ENCODE measurements at regions of chr14 and their contacts with region 1.

Region 1: GRCh38 chr14:73458151-73458976 is at the start of gene NUMB:
- DNase-seq: peak; percentile 99
- ATAC-seq: peak; percentile 97
- H3K4me3 ChIP-seq: peak within 1 kb of the TSS; percentile 61 to 81
- H3K27ac ChIP-seq: peak within 1 kb of the TSS; percentile 91
- H3K4me1 ChIP-seq: peaks cover 8% of the 10 kb centered on the region
- H3K27me3 ChIP-seq: no peaks in the 10 kb centered on the region
- CTCF ChIP-seq: no peak
- total RNA-seq, gene NUMB: 51.5 TPM

Region 2: DNA sequence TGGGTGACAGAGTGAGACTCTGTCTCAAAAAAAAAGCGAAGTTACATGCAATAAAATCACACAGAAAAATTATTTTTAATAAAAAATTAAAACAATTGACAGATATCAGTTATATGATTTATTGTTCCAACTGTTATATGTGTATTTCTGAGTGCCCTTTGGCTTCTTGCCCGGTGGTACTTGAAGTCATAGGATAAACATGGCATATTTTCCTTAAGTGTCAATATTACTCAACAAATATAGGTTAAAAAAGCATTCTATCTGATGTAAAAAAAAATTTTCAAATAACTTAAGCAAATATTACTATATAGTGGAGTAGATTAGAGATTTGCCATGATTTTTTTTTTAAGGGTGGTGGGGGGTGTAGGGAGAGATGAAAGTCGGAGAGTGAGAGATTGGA is 366.5 kb before region 1 on chr14:
- CTCF ChIA-PET with region 1: no interaction called
- POLR2A ChIA-PET with region 1: no interaction called
- in situ Hi-C with region 1: no loop called
- intact Hi-C with region 1: no loop called
- DNase-seq: no peak
- ATAC-seq: no peak
- H3K4me3 ChIP-seq: no peak overlapping the region
- H3K27ac ChIP-seq: no peak overlapping the region
- H3K4me1 ChIP-seq: no peaks in the 10 kb centered on the region
- H3K27me3 ChIP-seq: no peaks in the 10 kb centered on the region
- CTCF ChIP-seq: no peak

Region 3: GRCh38 chr14:73269729-73270531 is 188.4 kb before region 1 on chr14:
- CTCF ChIA-PET with region 1: no interaction called
- POLR2A ChIA-PET with region 1: interaction called, 10 read pairs
- in situ Hi-C with region 1: no loop called
- intact Hi-C with region 1: no loop called
- DNase-seq: no peak
- ATAC-seq: no peak
- H3K4me3 ChIP-seq: no peak overlapping the region
- H3K27ac ChIP-seq: no peak overlapping the region
- H3K4me1 ChIP-seq: no peaks in the 10 kb centered on the region
- H3K27me3 ChIP-seq: no peaks in the 10 kb centered on the region
- CTCF ChIP-seq: no peak

Region 4: GRCh38 chr14:73295198-73295796 is 163.1 kb before region 1 on chr14:
- CTCF ChIA-PET with region 1: interaction called, 6 read pairs
- POLR2A ChIA-PET with region 1: no interaction called
- in situ Hi-C with region 1: no loop called
- intact Hi-C with region 1: loop called (anchors 5 kb)
- DNase-seq: no peak
- ATAC-seq: peak; percentile 66; the same call in 1 of the 2 replicates
- H3K4me3 ChIP-seq: no peak overlapping the region
- H3K27ac ChIP-seq: no peak overlapping the region
- H3K4me1 ChIP-seq: no peaks in the 10 kb centered on the region
- H3K27me3 ChIP-seq: no peaks in the 10 kb centered on the region
- CTCF ChIP-seq: peak; percentile 67

Region 5: GRCh38 chr14:73426877-73427276 is 31.5 kb before region 1 on chr14:
- CTCF ChIA-PET with region 1: interaction called, 14 read pairs
- POLR2A ChIA-PET with region 1: no interaction called
- in situ Hi-C with region 1: no loop called
- intact Hi-C with region 1: no loop called
- DNase-seq: no peak
- ATAC-seq: no peak
- H3K4me3 ChIP-seq: no peak overlapping the region
- H3K27ac ChIP-seq: no peak overlapping the region
- H3K4me1 ChIP-seq: peaks cover 24% of the 10 kb centered on the region
- H3K27me3 ChIP-seq: no peaks in the 10 kb centered on the region
- CTCF ChIP-seq: no peak

Region 6: DNA sequence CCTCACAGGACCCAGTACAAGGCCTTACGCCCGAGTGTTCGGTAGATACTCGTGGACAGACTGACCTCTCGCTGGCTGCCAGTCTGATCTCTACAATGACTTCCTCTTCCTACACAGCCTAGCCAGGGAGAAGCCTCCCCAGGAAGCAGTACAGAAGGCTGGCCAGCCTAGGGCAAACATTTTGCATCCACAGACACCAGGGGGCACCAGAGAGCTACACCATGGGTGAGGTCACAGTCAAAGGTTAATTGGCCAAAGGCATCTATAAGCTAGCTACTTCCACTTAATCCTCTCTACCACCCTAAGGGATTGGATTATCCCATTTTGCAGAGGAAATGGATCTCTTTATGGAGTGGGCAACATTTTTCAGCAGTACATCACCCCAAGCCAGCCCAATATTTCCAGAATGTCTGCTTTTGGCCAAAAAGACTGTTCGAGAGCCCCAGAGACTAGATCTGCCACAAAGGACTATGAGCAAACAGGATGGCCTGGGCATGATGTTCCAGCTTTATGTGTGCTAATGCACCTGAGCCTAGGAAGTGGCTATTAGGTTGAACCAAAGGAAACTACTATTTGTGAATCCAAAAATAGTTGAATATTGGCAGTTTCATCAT is 270.5 kb after region 1 on chr14:
- CTCF ChIA-PET with region 1: no interaction called
- POLR2A ChIA-PET with region 1: no interaction called
- in situ Hi-C with region 1: no loop called
- intact Hi-C with region 1: no loop called
- DNase-seq: peak; percentile 71
- ATAC-seq: peak; percentile 84
- H3K4me3 ChIP-seq: no peak overlapping the region
- H3K27ac ChIP-seq: peak overlapping the region; percentile 66
- H3K4me1 ChIP-seq: peaks cover 70% of the 10 kb centered on the region
- H3K27me3 ChIP-seq: no peaks in the 10 kb centered on the region
- CTCF ChIP-seq: peak; percentile 85

Region 7: GRCh38 chr14:74886001-74886400 is 1427.6 kb after region 1 on chr14:
- CTCF ChIA-PET with region 1: no interaction called
- POLR2A ChIA-PET with region 1: interaction called, 22 read pairs
- in situ Hi-C with region 1: no loop called
- intact Hi-C with region 1: no loop called
- DNase-seq: no peak
- ATAC-seq: no peak
- H3K4me3 ChIP-seq: no peak overlapping the region
- H3K27ac ChIP-seq: no peak overlapping the region
- H3K4me1 ChIP-seq: peaks cover 18% of the 10 kb centered on the region
- H3K27me3 ChIP-seq: no peaks in the 10 kb centered on the region
- CTCF ChIP-seq: no peak

Measured in Panc1 (cell line).